ENCODE measurements at regions of chr5 and their contacts with region 1.

Region 1: DNA sequence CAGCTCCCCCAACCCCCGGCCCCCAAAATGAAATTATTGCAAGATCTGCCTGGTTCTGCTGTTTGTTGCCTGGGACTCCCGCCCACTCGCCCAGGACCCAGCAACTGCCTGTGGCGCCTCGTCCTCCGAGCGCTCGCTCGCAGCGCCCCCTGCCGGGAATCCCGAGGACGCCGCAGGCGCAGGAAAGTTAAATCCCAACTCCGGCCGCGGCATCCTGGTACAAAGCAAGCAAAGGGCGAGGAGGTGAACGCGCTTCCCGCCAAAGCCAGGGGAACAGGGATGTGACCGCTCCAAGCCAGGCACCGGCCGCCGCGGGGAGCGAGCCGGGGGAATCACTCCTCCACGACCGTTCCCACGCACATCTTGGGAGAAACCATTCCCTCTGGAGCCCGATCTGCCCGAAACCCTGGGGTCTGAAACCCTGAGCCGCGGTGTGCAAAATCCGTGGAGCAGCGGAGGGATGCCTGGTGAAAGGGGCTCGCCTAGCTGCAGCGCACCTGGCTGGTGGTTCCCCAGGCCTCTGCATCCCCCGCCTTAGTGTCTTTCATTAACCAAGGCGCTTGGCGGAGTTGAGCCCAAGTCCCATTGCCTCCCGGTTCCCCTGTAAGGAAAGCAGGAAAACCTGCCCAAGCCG is 1.3 kb downstream of the SEMA5A start:
- DNase-seq: peak; percentile 71 to 90
- H3K4me3 ChIP-seq: peak overlapping the region; percentile 47
- H3K4me1 ChIP-seq: peaks cover 4% of the 10 kb centered on the region; the same call in 1 of the 2 replicates
- H3K27me3 ChIP-seq: peaks cover 6% of the 10 kb centered on the region

Region 2: DNA sequence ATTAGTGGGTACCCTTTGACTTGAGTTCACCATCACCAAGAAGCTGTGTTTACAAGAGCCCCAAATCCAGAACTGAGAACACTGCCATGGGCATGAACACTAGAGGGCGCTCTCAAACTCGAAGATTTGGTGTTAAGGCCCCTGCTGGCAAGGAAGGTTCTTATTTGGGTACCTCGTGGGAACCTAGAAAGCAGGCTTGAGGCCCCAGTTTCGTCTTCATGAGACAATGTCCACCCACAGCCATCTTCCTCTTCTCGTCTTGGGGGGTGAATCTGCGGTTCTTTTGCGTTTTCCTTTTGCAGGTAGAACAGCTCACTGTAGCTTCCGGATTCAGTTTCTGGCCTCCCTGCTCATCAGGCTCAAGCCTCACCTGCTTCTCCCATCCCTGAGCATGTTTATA is 182.8 kb before region 1 on chr5:
- in situ Hi-C with region 1: loop called (anchors 25 kb)
- DNase-seq: peak; percentile 55 to 78
- H3K4me3 ChIP-seq: no peak overlapping the region
- H3K4me1 ChIP-seq: peaks cover 4% of the 10 kb centered on the region
- H3K27me3 ChIP-seq: no peaks in the 10 kb centered on the region